Activated B cell treated with CpG ODN at 0.5 μM for 24 hours (primary cell): ENCODE measurements at regions of chr17 and their contacts with region 1.

Region 1: GRCh38 chr17:63600569-63601438 is at the start of gene TACO1:
- DNase-seq: peak; percentile 80
- ATAC-seq: peak; percentile 99
- H3K4me3 Mint-ChIP-seq: peak within 1 kb of the TSS; percentile 89
- H3K27ac Mint-ChIP-seq: peak within 1 kb of the TSS; percentile 76
- H3K4me1 Mint-ChIP-seq: peaks cover 17% of the 10 kb centered on the region
- H3K27me3 Mint-ChIP-seq: no peaks in the 10 kb centered on the region
- CTCF ChIP-seq: no peak
- total RNA-seq, gene TACO1: 19.1 and 23.5 TPM in 2 replicates

Region 2: DNA sequence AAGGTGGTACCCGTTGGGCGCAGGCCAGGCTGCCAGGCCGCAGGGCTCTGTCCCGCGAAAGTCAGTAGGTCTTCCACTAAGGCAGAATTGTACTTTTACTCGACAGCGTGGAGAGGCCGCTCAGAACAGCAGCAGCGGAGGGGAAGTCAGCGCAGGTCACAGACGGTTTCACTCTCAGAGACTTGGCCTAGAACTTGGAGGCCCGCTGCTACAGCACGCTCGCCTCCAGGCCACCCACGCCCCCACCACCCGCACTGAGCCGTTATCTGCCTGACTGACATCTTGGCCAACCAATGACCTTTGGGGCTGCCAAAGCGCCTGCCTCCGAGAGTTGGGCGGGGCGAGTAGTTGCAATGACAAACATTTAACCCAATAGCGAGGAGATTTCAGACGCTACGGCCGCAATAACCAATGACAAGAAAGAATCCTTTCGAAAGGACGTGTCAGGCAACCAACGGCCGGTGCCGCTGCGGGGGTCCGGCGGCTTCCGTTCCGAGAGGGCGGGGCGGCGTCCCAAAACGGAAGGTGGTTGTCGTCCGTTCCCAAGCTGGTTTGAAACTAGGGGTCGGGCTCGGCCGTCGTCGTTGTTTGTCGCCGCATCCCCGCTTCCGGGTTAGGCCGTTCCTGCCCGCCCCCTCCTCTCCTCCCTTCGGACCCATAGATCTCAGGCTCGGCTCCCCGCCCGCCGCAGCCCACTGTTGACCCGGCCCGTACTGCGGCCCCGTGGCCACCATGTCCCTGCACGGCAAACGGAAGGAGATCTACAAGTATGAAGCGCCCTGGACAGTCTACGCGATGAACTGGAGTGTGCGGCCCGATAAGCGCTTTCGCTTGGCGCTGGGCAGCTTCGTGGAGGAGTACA is 50.6 kb before region 1 on chr17 and contains the start of gene DCAF7:
- CTCF ChIA-PET with region 1: no interaction called
- POLR2A ChIA-PET with region 1: interaction called, 4 read pairs
- intact Hi-C with region 1: loop called (anchors 1 kb)
- DNase-seq: peak; percentile 94
- ATAC-seq: peak; percentile 94
- H3K4me3 Mint-ChIP-seq: peak within 1 kb of the TSS; percentile 99
- H3K27ac Mint-ChIP-seq: peak within 1 kb of the TSS; percentile 95
- H3K4me1 Mint-ChIP-seq: peaks cover 56% of the 10 kb centered on the region
- H3K27me3 Mint-ChIP-seq: no peaks in the 10 kb centered on the region
- CTCF ChIP-seq: no peak
- total RNA-seq, gene DCAF7: 91.9 and 103 TPM in 2 replicates

Region 3: DNA sequence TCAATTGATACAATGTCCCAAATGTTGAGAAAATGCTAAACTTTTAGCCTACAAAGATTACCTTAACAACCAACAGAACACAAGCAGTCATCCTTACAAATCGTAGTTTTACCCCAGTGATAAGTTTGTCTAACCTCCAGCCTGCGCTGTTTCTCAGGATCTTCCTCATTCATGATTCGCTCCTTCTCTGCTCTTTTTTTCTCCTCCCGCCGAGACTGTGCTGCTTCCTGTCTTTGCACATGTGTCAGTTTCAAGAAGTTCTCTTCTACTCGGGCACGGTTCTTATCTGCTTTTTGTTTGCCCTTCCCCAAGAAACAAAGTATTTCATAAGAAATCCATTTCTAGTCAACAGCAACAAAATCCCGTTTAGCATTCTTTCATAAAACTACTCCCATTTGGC is 151.0 kb after region 1 on chr17:
- CTCF ChIA-PET with region 1: no interaction called
- POLR2A ChIA-PET with region 1: no interaction called
- intact Hi-C with region 1: no loop called
- DNase-seq: no peak
- ATAC-seq: peak; percentile 77
- H3K4me3 Mint-ChIP-seq: peak overlapping the region; percentile 48
- H3K27ac Mint-ChIP-seq: peak overlapping the region; percentile 77
- H3K4me1 Mint-ChIP-seq: peaks cover 9% of the 10 kb centered on the region
- H3K27me3 Mint-ChIP-seq: no peaks in the 10 kb centered on the region
- CTCF ChIP-seq: no peak

Region 4: DNA sequence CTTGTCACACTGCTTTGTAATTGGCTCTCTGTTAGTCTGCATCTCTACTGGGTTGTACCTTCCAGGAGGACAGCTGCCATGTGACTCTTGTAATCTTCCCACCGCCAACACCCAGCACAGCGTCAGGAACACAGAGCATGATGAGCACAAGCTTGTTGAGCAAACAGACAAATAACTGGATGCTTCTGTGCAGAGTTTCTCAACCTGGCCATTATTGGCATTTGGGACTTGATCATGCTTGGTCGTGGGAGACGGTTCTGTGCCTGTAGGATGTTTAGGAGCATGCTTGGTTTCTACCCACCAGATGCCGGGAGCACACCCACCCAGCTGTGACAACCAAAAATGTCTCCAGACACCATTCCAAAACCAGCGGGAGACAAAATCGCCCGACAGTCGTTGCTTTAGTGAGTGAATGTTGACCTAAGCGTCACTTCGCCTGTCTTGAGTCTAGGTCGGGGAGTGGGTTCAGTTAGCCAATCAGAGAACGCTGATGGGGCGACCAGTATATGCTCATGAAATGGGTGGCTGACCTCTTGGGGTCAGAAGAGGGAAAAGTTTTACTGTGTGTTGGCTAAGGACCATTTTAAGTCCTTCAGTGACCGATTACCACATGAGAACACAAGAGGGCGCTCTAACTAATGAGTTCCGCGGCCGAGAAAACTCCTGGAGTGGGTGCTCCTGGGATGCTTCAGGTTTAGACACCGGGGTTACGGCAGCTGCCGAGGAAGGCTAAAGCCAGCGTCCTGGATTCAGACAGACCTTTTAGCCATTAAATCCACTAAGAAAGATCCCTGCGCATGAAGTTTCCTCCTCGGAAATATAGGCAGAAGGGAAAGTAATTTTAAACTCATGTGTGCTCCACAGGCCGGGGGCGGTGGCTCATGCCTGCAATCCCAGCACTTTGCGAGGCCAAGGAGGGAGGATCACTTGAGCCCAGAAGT is 720.1 kb after region 1 on chr17:
- CTCF ChIA-PET with region 1: no interaction called
- POLR2A ChIA-PET with region 1: no interaction called
- intact Hi-C with region 1: no loop called
- DNase-seq: peak; percentile 21
- ATAC-seq: no peak
- H3K4me3 Mint-ChIP-seq: peak overlapping the region; percentile 55
- H3K27ac Mint-ChIP-seq: no peak overlapping the region
- H3K4me1 Mint-ChIP-seq: peaks cover 43% of the 10 kb centered on the region
- H3K27me3 Mint-ChIP-seq: peaks cover 2% of the 10 kb centered on the region
- CTCF ChIP-seq: no peak